ENCODE measurements at regions of chr22 and their contacts with region 1.

Region 1: DNA sequence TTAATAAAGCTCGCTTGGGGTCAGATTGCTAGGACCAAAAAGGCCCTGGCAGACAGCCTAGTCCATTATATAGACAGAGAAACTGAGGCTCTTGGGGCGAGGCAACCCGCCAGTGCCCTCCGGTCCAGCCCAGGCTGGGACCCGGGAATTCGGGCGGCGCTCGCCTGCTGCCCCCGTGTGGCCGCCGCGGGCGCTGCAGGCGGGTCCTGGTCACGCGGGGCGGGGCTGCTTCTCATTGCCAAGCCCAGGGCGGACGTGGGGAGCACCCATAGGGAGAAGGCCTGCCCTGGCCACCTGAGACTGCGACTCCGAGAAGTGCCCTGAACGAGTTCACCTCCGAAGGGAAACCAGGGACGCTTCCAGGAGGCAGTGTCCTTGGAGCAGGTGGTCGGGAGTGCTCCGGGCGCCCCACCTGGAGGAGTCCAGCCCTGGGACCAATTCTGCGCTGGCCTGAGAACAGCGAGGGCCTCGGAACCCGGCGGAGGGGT is 36.0 kb upstream of the CSNK1E start:
- DNase-seq: peak; percentile 54 to 86 (median 70)
- H3K4me3 ChIP-seq: no peak overlapping the region
- H3K27ac ChIP-seq: no peak overlapping the region
- H3K4me1 ChIP-seq: no peaks in the 10 kb centered on the region
- H3K27me3 ChIP-seq: no peaks in the 10 kb centered on the region
- CTCF ChIP-seq: peak; percentile 95 to 99 (median 96)
- EP300 ChIP-seq: no peak
- POLR2A ChIP-seq: no peak

Region 2: GRCh38 chr22:38051900-38052862 is 301.0 kb before region 1 on chr22:
- intact Hi-C with region 1: loop called in 3 of 4 experiments (anchors 5 to 10 kb)
- DNase-seq: peak; percentile 67 to 87 (median 81)
- H3K4me3 ChIP-seq: no peak overlapping the region
- H3K27ac ChIP-seq: no peak overlapping the region
- H3K4me1 ChIP-seq: peaks cover 6% of the 10 kb centered on the region
- H3K27me3 ChIP-seq: no peaks in the 10 kb centered on the region
- CTCF ChIP-seq: peak; percentile 43 to 94 (median 89)
- EP300 ChIP-seq: no peak
- POLR2A ChIP-seq: no peak

Region 3: GRCh38 chr22:38114484-38115398 is 238.4 kb before region 1 on chr22:
- intact Hi-C with region 1: loop called in 2 of 4 experiments (anchors 5 kb)
- DNase-seq: peak; percentile 74 to 90 (median 85)
- H3K4me3 ChIP-seq: no peak overlapping the region
- H3K27ac ChIP-seq: no peak overlapping the region
- H3K4me1 ChIP-seq: no peaks in the 10 kb centered on the region
- H3K27me3 ChIP-seq: no peaks in the 10 kb centered on the region
- CTCF ChIP-seq: peak; percentile 74 to 89 (median 78)
- EP300 ChIP-seq: no peak
- POLR2A ChIP-seq: no peak

Region 4: DNA sequence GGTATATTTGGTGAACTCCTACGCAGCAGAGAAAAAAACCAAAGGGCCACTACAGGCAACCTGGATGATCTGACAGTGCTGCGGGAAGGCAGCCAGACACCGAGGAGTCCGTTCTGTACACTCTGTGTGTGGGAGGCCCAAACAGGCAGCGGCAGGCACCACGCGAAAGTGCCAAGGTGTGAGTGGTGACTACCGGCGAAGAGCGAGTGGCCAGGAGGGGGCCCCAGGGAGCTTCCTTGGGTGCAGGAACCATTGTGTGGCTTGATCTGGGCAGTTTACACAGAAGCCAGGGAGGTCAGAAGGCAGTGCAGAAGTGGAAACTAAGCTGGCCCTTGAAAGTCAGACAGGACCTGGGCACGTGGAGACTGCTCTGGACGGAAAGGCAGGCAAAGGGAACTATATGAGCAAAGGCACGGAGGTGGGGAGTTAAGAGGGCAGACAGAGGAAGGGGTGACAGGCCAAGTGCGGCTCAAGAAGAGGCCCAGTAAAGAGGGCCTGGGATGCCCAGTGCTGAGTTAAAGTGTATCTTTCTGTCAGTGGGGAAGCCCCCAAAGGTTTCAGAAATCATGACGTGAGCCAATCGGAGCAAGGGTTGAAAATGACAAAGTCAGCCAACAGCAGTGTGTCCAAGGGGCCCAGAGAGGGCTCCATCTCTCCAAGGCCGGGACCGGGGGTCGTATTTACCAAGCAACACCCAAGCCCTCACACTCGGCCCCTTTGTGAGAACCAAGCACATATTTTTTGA is 91.0 kb before region 1 on chr22:
- intact Hi-C with region 1: loop called in 1 of 4 experiments (anchors 10 kb)
- DNase-seq: peak in 4 of 5 donors; percentile 46 to 74 (median 56)
- H3K4me3 ChIP-seq: no peak overlapping the region
- H3K27ac ChIP-seq: peak overlapping the region; percentile 32 to 46
- H3K4me1 ChIP-seq: peaks cover 27% of the 10 kb centered on the region
- H3K27me3 ChIP-seq: no peaks in the 10 kb centered on the region
- CTCF ChIP-seq: peak in 1 of 3 donors; percentile 35
- EP300 ChIP-seq: no peak
- POLR2A ChIP-seq: no peak

Measured in ovary (tissue), 10 donors.